Endothelial cell of umbilical vein (primary cell): ENCODE measurements at regions of chr3 and their contacts with region 1.

Region 1: DNA sequence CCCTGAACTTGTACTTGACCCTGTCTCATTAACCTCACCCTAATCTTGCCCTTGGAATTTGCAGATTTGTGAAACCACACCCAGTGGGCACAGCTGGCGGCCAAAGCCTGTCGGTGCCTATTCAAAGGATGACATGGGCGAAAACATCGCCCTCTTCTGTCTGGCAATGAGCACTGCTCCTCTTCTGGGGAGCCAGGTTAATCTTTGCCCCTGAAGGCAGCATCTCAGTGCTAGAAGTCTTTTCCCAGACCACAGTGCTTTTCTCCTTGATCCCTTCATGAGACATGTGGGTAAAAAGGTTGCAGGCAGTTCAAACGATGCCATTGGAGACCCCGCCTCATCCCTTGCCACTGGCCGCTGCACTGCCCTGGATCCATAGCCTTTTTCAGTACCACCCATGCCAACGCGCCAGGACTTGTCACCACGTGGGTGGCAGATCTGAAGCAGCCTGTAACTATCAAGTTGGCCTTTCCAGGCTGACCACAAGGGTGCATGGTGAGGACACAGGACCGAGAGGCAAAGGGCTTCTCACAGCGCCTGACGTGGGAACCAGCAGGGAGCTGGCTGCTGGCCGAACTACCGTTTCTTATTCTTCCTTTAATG is 6.5 kb upstream of the DNASE1L3 start:
- DNase-seq: peak; percentile 77
- H3K4me3 ChIP-seq: no peak overlapping the region
- H3K27ac ChIP-seq: no peak overlapping the region
- H3K4me1 ChIP-seq: no peaks in the 10 kb centered on the region
- H3K27me3 ChIP-seq: no peaks in the 10 kb centered on the region
- CTCF ChIP-seq: peak; percentile 81 to 86
- POLR2A ChIP-seq: no peak

Region 2: DNA sequence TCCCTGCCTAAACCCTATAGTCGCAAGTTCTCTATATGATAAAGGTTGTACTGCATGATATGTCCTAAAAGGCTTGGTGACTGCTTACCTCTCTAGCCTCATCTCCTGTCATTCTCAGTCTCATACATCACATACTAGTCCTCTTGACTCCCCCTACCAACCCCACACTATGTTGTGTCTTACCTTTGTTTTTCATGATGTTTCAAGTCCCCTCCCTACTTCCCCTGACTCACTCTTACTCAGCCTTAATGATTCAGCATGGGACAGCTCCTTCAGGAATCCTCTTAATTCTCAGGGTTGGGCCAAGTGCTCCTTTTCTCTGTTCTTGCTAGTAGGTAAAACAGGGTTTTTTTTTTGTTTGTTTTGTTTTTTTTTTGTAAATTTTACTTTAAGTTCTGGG is 411.6 kb before region 1 on chr3:
- CTCF ChIA-PET with region 1: no interaction called
- POLR2A ChIA-PET with region 1: no interaction called
- dilution Hi-C with region 1: no loop called
- intact Hi-C with region 1: no loop called
- DNase-seq: peak; percentile 76
- H3K4me3 ChIP-seq: no peak overlapping the region
- H3K27ac ChIP-seq: no peak overlapping the region
- H3K4me1 ChIP-seq: peaks cover 27% of the 10 kb centered on the region
- H3K27me3 ChIP-seq: no peaks in the 10 kb centered on the region
- CTCF ChIP-seq: no peak
- POLR2A ChIP-seq: no peak

Region 3: GRCh38 chr3:58063022-58063815 is 154.1 kb before region 1 on chr3:
- CTCF ChIA-PET with region 1: no interaction called
- POLR2A ChIA-PET with region 1: no interaction called
- dilution Hi-C with region 1: no loop called
- intact Hi-C with region 1: no loop called
- DNase-seq: no peak
- H3K4me3 ChIP-seq: no peak overlapping the region
- H3K27ac ChIP-seq: peak overlapping the region; percentile 5
- H3K4me1 ChIP-seq: peaks cover 63% of the 10 kb centered on the region
- H3K27me3 ChIP-seq: no peaks in the 10 kb centered on the region
- CTCF ChIP-seq: no peak
- POLR2A ChIP-seq: no peak

Region 4: GRCh38 chr3:58177747-58178527 is 39.4 kb before region 1 on chr3:
- CTCF ChIA-PET with region 1: interaction called, 47 read pairs
- POLR2A ChIA-PET with region 1: no interaction called
- dilution Hi-C with region 1: no loop called
- intact Hi-C with region 1: loop called (anchors 2 kb)
- DNase-seq: peak; percentile 79
- H3K4me3 ChIP-seq: peak overlapping the region in 2 of 3 experiments; percentile 8 to 22
- H3K27ac ChIP-seq: no peak overlapping the region
- H3K4me1 ChIP-seq: peaks cover 34% of the 10 kb centered on the region
- H3K27me3 ChIP-seq: no peaks in the 10 kb centered on the region
- CTCF ChIP-seq: peak; percentile 89 to 97
- POLR2A ChIP-seq: peak; percentile 36

Region 5: DNA sequence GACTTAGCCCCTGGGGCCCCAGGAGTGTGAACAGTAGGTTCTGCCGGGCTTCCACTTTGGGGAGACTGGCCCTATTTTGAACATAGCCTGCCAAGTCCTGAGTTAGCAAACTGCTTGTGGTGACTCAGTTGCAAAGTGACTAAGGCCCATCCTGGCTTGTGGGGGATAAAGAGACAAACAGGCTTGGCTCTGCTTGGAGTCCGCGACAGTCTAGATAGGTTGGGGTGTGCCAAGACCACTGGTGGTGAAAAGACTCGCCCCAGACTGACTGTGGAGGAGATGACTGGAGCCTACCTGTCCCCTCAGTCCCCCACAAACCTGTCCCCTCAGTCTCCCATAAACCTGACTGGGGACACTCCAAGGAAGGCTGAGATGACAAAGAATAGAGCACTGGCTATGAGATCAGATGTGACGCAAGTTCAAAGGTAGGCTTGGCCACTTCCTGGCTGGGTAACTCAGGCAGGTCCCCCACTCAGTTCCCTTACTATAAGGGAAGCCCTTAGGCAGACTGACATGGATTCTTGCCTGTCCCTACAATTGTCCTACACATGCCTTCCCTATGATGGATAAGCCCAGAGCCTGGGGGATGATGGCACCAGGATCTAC is 10.8 kb before region 1 on chr3:
- CTCF ChIA-PET with region 1: interaction called, 23 read pairs
- POLR2A ChIA-PET with region 1: no interaction called
- dilution Hi-C with region 1: no loop called
- intact Hi-C with region 1: no loop called
- DNase-seq: no peak
- H3K4me3 ChIP-seq: no peak overlapping the region
- H3K27ac ChIP-seq: no peak overlapping the region
- H3K4me1 ChIP-seq: peaks cover 3% of the 10 kb centered on the region
- H3K27me3 ChIP-seq: no peaks in the 10 kb centered on the region
- CTCF ChIP-seq: no peak
- POLR2A ChIP-seq: no peak

Region 6: GRCh38 chr3:58237238-58237940 is 20.1 kb after region 1 on chr3 and contains the start of gene ABHD6:
- CTCF ChIA-PET with region 1: interaction called, 18 read pairs
- POLR2A ChIA-PET with region 1: no interaction called
- dilution Hi-C with region 1: no loop called
- intact Hi-C with region 1: no loop called
- DNase-seq: peak; percentile 66
- H3K4me3 ChIP-seq: peak within 1 kb of the TSS; percentile 65 to 73 (median 71)
- H3K27ac ChIP-seq: peak within 1 kb of the TSS; percentile 25
- H3K4me1 ChIP-seq: peaks cover 6% of the 10 kb centered on the region
- H3K27me3 ChIP-seq: peaks cover 4 to 6% of the 10 kb centered on the region in 2 experiments
- CTCF ChIP-seq: peak in 1 of 2 donors; percentile 17
- POLR2A ChIP-seq: peak; percentile 41
- total RNA-seq, gene ABHD6: 5.4 and 5.8 TPM in 2 replicates

Region 7: GRCh38 chr3:58293516-58293915 is 76.2 kb after region 1 on chr3:
- CTCF ChIA-PET with region 1: interaction called, 24 read pairs
- POLR2A ChIA-PET with region 1: no interaction called
- dilution Hi-C with region 1: no loop called
- intact Hi-C with region 1: no loop called
- DNase-seq: no peak
- H3K4me3 ChIP-seq: no peak overlapping the region
- H3K27ac ChIP-seq: no peak overlapping the region
- H3K4me1 ChIP-seq: no peaks in the 10 kb centered on the region
- H3K27me3 ChIP-seq: peaks cover 0 to 4% of the 10 kb centered on the region in 2 experiments
- CTCF ChIP-seq: no peak
- POLR2A ChIP-seq: no peak

Region 8: DNA sequence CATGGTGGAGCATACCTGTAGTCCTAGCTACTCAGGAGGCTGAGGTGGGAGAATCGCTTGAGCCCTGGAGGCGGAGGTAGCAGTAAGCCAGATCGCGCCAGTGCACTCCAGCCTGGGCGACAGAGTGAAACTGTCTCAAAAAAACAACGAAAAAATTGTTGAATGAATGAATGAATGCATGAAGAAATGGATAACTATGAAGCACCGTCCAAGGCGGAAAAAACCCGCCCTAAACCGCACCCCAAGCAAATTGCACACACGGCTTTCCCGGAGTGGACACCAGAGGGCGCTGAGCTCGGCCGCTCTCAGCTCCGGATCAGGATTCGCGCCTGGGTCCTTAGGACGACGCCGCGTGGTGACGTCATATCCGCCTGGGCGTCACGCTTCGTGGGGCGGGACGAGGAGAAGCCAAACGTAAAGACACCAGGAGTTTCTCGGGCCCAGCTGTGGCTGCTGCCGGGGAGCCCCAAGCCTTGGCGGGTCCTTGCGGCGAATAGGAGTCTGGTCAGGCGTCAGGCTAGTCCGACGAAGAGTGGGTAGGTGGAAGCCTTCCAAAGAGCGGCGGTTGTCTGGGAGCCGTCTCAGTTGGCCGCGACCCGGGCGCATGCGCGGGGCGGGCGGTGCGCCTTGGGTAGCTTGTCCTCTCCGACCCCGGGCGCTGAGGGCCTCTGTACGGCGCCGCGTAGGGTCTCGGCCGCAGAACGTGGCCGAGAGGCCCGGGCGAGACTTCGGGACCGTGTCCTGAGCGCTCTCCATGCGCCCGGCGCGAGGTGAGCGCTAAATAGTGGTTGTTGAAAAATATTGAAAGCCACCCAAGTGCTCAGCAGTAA is 88.8 kb after region 1 on chr3 and contains the starts of genes HTD2 and RPP14:
- CTCF ChIA-PET with region 1: interaction called, 42 read pairs
- POLR2A ChIA-PET with region 1: no interaction called
- dilution Hi-C with region 1: no loop called
- intact Hi-C with region 1: no loop called
- DNase-seq: peak; percentile 98
- H3K4me3 ChIP-seq: peak within 1 kb of the TSS; percentile 81 to 98 (median 94)
- H3K27ac ChIP-seq: peak within 1 kb of the TSS; percentile 96
- H3K4me1 ChIP-seq: peaks cover 19% of the 10 kb centered on the region
- H3K27me3 ChIP-seq: peaks cover 15 to 16% of the 10 kb centered on the region in 2 experiments
- CTCF ChIP-seq: peak; percentile 98
- POLR2A ChIP-seq: peak; percentile 92
- total RNA-seq, gene HTD2: 10.0 and 10.3 TPM in 2 replicates
- total RNA-seq, gene RPP14: 18.1 and 21.3 TPM in 2 replicates

Region 9: GRCh38 chr3:58502872-58503271 is 285.6 kb after region 1 on chr3:
- CTCF ChIA-PET with region 1: no interaction called
- POLR2A ChIA-PET with region 1: no interaction called
- dilution Hi-C with region 1: no loop called
- intact Hi-C with region 1: no loop called
- DNase-seq: no peak
- H3K4me3 ChIP-seq: no peak overlapping the region
- H3K27ac ChIP-seq: no peak overlapping the region
- H3K4me1 ChIP-seq: no peaks in the 10 kb centered on the region
- H3K27me3 ChIP-seq: no peaks in the 10 kb centered on the region
- CTCF ChIP-seq: no peak
- POLR2A ChIP-seq: no peak